Sciatic nerve (tissue), 2 donors: ENCODE measurements at regions of chr2 and their contacts with region 1.

Region 1: GRCh38 chr2:148273158-148273691 is 252.3 kb downstream of the MBD5 start:
- DNase-seq: no peak
- ATAC-seq: no peak

Region 2: GRCh38 chr2:147867050-147867449 is 406.2 kb before region 1 on chr2:
- intact Hi-C with region 1: no loop called
- DNase-seq: no peak
- ATAC-seq: no peak

Region 3: GRCh38 chr2:148000095-148000494 is 273.1 kb before region 1 on chr2:
- intact Hi-C with region 1: loop called (anchors 5 kb)
- DNase-seq: no peak
- ATAC-seq: no peak